CD8-positive, alpha-beta T cell (primary cell): ENCODE measurements at regions of chr14 and their contacts with region 1.

Region 1: DNA sequence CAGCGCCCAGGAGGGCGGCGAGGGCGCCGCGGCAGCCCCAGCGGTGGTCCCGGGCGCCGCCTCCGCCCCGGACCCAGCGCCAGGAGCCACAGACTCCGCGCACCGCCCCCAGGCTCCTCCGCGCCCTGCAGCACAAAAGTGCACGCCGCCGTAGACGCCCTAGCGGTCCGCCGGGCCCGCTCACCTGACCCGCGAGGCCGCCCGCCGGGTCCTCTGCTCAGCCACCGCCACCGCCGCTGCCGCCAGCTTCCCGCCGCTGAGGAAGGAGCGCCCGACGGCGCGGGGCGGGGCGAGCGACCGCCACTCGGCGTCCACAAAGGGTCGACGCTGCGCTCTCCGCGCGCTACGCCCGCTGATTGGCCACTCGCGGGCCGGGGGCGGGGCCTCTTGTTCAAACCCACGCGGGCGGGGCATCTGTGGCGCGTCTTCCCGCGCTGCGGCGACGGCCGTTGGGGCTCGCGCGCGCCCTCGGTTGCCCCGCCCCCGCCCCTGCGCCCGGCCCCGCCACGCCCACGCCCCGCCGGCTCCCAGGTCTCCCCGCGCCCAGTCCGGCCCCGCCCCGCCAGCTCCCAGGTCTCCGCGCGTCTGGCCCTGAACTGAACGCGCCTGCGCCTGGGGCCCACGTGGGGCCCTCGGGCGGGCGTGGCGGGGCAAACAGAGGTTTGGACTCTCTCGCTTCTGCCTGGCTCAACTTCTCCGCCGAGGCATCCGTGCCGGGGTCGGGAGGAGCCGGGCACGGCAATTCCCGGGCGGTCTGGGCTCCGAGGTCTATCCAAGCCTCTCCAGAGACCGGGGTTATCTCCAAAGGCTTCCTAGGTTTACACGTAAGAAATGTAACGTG is at the start of gene CDCA4:
- DNase-seq: peak; percentile 97 to 99 (median 98)
- ATAC-seq: peak; percentile 82
- H3K4me3 ChIP-seq: peak within 1 kb of the TSS; percentile 58 to 87
- H3K4me3 Mint-ChIP-seq: peak within 1 kb of the TSS; percentile 89
- H3K27ac ChIP-seq: peak within 1 kb of the TSS; percentile 78 to 81
- H3K27ac Mint-ChIP-seq: peak within 1 kb of the TSS; percentile 96
- H3K4me1 ChIP-seq: peaks cover 23% of the 10 kb centered on the region
- H3K4me1 Mint-ChIP-seq: peaks cover 53% of the 10 kb centered on the region
- H3K27me3 ChIP-seq: no peaks in the 10 kb centered on the region
- H3K27me3 Mint-ChIP-seq: no peaks in the 10 kb centered on the region
- CTCF ChIP-seq: no peak
- total RNA-seq, gene CDCA4: 20.2 to 22.9 TPM

Region 2: DNA sequence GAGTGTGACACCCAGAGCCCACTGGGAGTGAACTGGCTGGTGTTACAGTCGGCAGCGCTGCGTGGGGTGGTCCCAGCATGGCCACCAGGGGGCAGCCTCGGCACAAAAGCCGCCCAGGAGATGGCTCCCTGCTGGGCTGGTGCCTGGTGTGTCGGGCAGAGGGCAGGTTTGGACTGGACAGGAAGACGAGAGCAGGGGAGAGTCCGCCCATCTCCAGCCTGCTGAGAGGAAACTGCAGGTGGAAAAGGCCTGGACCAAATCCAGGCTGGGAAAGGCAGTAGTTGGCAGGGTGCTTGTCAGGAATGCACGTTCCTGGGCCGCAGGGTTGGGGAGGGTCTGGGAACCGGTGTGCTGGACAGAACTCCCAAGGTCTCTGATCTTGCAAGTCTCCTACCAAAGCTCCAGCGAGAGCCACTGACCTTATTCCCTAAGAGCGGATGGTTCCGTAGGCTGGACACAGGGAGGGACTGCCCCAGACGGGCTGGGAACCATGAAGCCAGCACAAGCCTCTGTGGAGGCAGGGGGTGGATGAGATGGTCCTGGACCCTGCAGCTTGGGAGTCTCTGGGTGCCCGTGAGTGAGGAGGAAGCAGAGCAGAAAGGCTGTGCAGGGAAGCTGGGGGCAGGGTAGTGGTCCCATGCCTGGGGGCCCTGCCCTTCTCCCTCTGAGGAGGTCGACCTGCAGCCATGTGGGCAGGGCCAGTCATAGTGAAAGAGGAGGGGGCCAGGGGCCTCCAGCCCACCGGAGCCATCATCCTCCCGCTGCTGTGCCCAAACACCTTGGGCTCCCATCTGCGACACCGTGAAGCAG is 44.6 kb before region 1 on chr14:
- CTCF ChIA-PET with region 1: interaction called, 8 read pairs
- POLR2A ChIA-PET with region 1: no interaction called
- intact Hi-C with region 1: loop called in 1 of 2 experiments (anchors 2 kb)
- DNase-seq: peak; percentile 76 to 94 (median 88)
- ATAC-seq: peak; percentile 88
- H3K4me3 ChIP-seq: no peak overlapping the region
- H3K4me3 Mint-ChIP-seq: peak overlapping the region; percentile 67
- H3K27ac ChIP-seq: no peak overlapping the region
- H3K27ac Mint-ChIP-seq: no peak overlapping the region
- H3K4me1 ChIP-seq: peaks cover 8% of the 10 kb centered on the region
- H3K4me1 Mint-ChIP-seq: peaks cover 12% of the 10 kb centered on the region
- H3K27me3 ChIP-seq: peaks cover 9 to 16% of the 10 kb centered on the region in 2 experiments
- H3K27me3 Mint-ChIP-seq: peaks cover 22% of the 10 kb centered on the region
- CTCF ChIP-seq: peak; percentile 84

Region 3: GRCh38 chr14:104985675-104986525 is 35.1 kb before region 1 on chr14 and contains the start of gene CLBA1:
- CTCF ChIA-PET with region 1: interaction called, 7 read pairs
- POLR2A ChIA-PET with region 1: interaction called, 20 read pairs
- intact Hi-C with region 1: loop called (anchors 1 kb)
- DNase-seq: peak; percentile 75 to 97 (median 87)
- ATAC-seq: peak; percentile 94
- H3K4me3 ChIP-seq: peak within 1 kb of the TSS; percentile 54 to 60
- H3K4me3 Mint-ChIP-seq: peak within 1 kb of the TSS; percentile 78
- H3K27ac ChIP-seq: peak within 1 kb of the TSS; percentile 60 to 73
- H3K27ac Mint-ChIP-seq: peak within 1 kb of the TSS; percentile 57
- H3K4me1 ChIP-seq: peaks cover 8% of the 10 kb centered on the region
- H3K4me1 Mint-ChIP-seq: peaks cover 5% of the 10 kb centered on the region
- H3K27me3 ChIP-seq: no peaks in the 10 kb centered on the region
- H3K27me3 Mint-ChIP-seq: peaks cover 6% of the 10 kb centered on the region
- CTCF ChIP-seq: no peak
- total RNA-seq, gene CLBA1: 0.84 to 1.0 TPM

Region 4: DNA sequence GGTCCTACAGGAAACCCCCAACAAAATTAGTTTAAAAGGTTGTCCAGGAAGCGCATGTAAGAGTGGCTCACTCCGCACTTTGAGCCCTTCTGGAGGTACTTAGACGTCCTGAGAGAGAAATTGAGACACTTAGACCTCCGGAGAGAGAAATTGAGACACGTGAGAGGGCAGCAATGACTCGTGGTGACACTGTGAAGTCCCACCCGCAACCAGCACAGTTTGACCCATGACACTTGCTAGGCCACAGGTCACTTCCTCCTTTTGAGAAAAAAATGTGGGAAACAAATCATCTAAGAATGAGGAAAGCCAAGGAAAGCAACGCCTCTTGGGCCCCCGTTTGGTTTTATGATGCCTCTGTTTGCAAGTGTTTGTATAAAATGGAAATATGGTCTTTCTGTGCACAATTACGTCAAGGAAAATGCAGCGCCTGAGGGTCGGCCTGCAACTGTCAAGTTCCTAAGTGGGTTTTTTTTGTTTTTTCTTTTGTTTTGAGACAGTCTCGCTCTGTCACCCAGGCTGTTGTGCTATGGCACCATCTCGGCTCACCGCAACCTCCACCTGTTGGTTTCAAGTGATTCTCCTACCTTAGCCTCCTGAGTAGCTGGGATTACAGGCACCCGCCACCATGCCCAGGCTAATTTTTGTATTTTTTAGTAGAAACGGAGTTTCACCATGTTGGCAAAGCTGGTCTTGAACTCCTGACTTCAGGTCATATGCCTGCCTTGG is 13.4 kb after region 1 on chr14:
- CTCF ChIA-PET with region 1: interaction called, 3 read pairs
- POLR2A ChIA-PET with region 1: interaction called, 4 read pairs
- intact Hi-C with region 1: loop called in 1 of 2 experiments (anchors 1 kb)
- DNase-seq: no peak
- ATAC-seq: no peak
- H3K4me3 ChIP-seq: no peak overlapping the region
- H3K4me3 Mint-ChIP-seq: peak overlapping the region; percentile 31
- H3K27ac ChIP-seq: no peak overlapping the region
- H3K27ac Mint-ChIP-seq: no peak overlapping the region
- H3K4me1 ChIP-seq: peaks cover 8% of the 10 kb centered on the region
- H3K4me1 Mint-ChIP-seq: peaks cover 13% of the 10 kb centered on the region
- H3K27me3 ChIP-seq: no peaks in the 10 kb centered on the region
- H3K27me3 Mint-ChIP-seq: no peaks in the 10 kb centered on the region
- CTCF ChIP-seq: no peak

Region 5: DNA sequence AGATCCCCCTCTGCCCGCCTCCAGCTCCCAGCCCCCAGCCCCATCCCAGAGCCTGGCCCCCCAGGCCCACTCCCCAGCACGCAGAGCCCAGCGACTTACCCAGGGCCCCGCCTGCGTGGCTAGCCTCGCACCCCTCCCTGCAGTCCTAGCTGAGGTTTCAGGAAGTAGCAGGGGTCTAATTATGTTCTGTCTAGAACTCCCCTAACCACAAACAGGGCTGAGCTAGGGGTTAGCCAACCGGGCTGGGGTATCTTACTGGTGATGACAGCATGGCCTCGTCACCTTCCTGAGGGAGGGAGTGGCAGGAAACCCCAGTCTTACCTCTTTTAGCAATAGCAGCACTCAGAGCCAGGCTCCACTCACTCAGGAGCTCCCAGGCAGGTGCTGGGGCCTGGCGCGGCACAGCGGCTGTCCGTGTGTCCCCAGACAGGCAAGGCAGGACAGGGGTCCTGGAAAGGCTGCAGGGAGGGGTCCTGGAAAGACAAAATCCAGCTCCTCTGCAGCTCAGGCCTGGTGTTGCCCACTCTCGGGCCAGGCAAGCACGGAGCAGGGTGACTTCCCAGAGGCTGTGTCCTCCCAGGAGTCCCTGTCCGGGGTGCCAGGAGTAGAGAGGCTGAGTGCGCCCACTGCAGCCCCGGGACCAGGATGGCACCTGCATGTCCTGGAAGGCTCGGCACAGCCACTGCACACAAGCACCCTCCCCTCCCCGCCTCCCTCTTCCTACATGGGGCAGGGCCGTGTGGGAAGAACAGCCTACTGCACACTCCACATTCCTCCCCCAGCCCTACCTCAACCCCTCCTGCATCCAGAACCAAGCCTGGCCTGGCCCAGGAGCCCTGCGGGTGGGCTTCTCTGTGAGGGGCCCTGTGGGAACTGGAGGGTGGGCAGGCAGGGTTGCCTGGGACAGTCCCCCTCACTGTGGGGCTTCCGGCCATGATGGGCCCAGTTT is 44.5 kb after region 1 on chr14 and contains the start of gene GPR132:
- CTCF ChIA-PET with region 1: no interaction called
- POLR2A ChIA-PET with region 1: interaction called, 12 read pairs
- intact Hi-C with region 1: loop called (anchors 1 kb)
- DNase-seq: peak; percentile 79 to 99 (median 89)
- ATAC-seq: peak; percentile 87
- H3K4me3 ChIP-seq: peak within 1 kb of the TSS; percentile 90 to 92
- H3K4me3 Mint-ChIP-seq: peak within 1 kb of the TSS; percentile 94
- H3K27ac ChIP-seq: peak within 1 kb of the TSS; percentile 97 to 98
- H3K27ac Mint-ChIP-seq: peak within 1 kb of the TSS; percentile 98
- H3K4me1 ChIP-seq: peaks cover 88% of the 10 kb centered on the region
- H3K4me1 Mint-ChIP-seq: peaks cover 75% of the 10 kb centered on the region
- H3K27me3 ChIP-seq: no peaks in the 10 kb centered on the region
- H3K27me3 Mint-ChIP-seq: no peaks in the 10 kb centered on the region
- CTCF ChIP-seq: no peak
- total RNA-seq, gene GPR132: 91.8 to 101 TPM

Region 6: DNA sequence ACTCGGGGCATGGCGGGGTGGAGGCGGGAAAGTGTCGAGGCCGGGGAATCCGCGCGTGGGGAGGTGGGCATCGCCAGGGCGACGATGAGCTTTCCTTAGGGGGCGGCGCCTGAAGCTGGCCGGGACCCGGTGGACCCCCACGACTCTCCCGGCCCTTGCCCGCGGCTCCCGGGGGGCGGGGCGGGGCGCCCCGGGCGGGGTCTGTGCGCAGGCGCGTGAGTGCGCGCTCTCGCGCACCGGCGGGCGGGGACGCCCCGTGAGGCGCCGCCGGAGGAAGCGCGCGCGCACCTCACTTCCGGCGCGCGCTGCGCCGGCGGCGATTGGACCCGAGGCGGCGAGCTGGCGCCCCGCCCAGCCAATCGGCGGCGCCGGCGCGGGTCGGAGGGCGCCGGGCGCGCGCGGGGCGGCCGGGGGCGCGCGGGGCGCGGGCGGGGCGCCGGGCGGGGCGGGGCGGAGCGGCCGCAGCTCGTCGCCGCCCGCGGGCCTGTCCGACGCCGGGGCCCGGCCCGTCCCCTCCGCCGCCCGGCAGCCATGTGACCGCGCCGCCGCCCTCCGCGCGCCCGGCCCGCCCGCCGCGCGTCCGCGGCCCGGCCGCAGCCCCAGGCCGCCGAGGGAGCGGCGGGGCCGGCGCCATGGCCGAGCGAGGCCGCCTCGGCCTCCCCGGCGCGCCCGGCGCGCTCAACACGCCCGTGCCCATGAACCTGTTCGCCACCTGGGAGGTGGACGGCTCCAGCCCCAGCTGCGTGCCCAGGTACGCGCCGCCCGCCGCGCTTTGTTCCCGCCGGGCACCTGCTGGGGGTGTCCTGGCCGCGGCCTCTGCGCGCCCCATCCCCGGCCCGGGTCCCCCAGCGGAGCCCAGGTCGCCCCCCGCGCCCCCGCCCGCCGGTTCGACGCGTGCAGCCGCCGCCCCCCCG is 293.5 kb after region 1 on chr14 and contains the start of gene PACS2:
- CTCF ChIA-PET with region 1: no interaction called
- POLR2A ChIA-PET with region 1: no interaction called
- intact Hi-C with region 1: loop called in 1 of 2 experiments (anchors 1 kb)
- DNase-seq: peak; percentile 47 to 96 (median 76)
- ATAC-seq: peak; percentile 73
- H3K4me3 ChIP-seq: peak within 1 kb of the TSS; percentile 55 to 60
- H3K4me3 Mint-ChIP-seq: peak within 1 kb of the TSS; percentile 91
- H3K27ac ChIP-seq: peak within 1 kb of the TSS; percentile 24 to 52
- H3K27ac Mint-ChIP-seq: peak within 1 kb of the TSS; percentile 85
- H3K4me1 ChIP-seq: peaks cover 21% of the 10 kb centered on the region
- H3K4me1 Mint-ChIP-seq: peaks cover 24% of the 10 kb centered on the region
- H3K27me3 ChIP-seq: no peaks in the 10 kb centered on the region
- H3K27me3 Mint-ChIP-seq: no peaks in the 10 kb centered on the region
- CTCF ChIP-seq: no peak
- total RNA-seq, gene PACS2: 46.5 to 56.1 TPM